ENCODE measurements at regions of chr6 and their contacts with region 1.

Region 1: DNA sequence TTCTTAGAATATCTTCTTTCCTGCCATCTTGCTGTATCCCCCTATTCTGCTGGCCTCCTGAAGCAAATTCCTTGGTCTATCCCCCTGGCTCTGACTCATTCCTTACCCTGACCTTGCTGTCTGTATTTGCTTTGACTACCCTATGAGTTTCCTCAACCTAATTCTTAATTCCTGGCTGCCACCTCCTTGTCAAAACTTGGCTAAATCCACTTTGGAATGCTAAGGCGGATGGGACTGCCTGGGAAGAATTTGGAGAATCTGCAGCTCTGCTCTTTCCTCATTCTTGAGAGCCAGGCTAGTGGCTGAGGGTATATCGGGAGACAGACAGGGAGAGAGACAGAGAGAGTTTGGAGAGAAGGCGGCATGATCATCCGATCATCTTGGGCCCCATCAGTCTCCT is 24.4 kb downstream of the CAP2 start:
- DNase-seq: no peak
- ATAC-seq: no peak
- H3K4me3 ChIP-seq: no peak overlapping the region
- H3K27ac ChIP-seq: no peak overlapping the region
- H3K4me1 ChIP-seq: no peaks in the 10 kb centered on the region
- H3K27me3 ChIP-seq: no peaks in the 10 kb centered on the region
- CTCF ChIP-seq: no peak
- EP300 ChIP-seq: no peak
- POLR2A ChIP-seq: no peak
- RAD21 ChIP-seq: no peak

Region 2: GRCh38 chr6:17167327-17167979 is 250.4 kb before region 1 on chr6:
- CTCF ChIA-PET with region 1: no interaction called
- POLR2A ChIA-PET with region 1: no interaction called
- RAD21 ChIA-PET with region 1: no interaction called
- SMC1A ChIA-PET with region 1: no interaction called
- in situ Hi-C with region 1: no loop called
- intact Hi-C with region 1: no loop called
- DNase-seq: no peak
- ATAC-seq: no peak
- H3K4me3 ChIP-seq: no peak overlapping the region
- H3K27ac ChIP-seq: no peak overlapping the region
- H3K4me1 ChIP-seq: no peaks in the 10 kb centered on the region
- H3K27me3 ChIP-seq: no peaks in the 10 kb centered on the region
- CTCF ChIP-seq: peak in 1 of 3 experiments; percentile 14; a peak in 2 of 6 replicates
- EP300 ChIP-seq: no peak
- POLR2A ChIP-seq: no peak
- RAD21 ChIP-seq: no peak

Region 3: DNA sequence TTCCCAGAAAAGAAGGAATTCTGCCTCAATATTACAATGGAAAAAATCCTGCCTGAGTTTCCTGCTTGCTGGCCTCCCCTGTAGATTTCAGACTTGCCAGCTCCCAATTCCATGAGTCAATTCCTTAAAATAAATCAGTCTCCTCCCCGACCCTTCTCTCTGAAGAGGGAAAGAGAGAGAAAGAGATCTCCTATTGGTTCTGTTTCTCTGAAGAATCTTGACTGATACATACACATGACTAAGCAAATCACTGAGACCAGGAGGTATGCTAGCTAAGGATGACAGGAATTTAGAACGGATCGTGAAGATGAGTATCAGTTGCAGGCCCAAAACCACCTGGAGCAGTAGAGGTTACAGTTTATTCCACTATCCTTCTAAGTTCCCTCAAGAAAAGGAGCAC is 148.0 kb before region 1 on chr6:
- CTCF ChIA-PET with region 1: no interaction called
- POLR2A ChIA-PET with region 1: no interaction called
- RAD21 ChIA-PET with region 1: no interaction called
- SMC1A ChIA-PET with region 1: no interaction called
- in situ Hi-C with region 1: no loop called
- intact Hi-C with region 1: no loop called
- DNase-seq: no peak
- ATAC-seq: no peak
- H3K4me3 ChIP-seq: no peak overlapping the region
- H3K27ac ChIP-seq: no peak overlapping the region
- H3K4me1 ChIP-seq: no peaks in the 10 kb centered on the region
- H3K27me3 ChIP-seq: no peaks in the 10 kb centered on the region
- CTCF ChIP-seq: no peak
- EP300 ChIP-seq: no peak
- POLR2A ChIP-seq: no peak
- RAD21 ChIP-seq: no peak

Region 4: DNA sequence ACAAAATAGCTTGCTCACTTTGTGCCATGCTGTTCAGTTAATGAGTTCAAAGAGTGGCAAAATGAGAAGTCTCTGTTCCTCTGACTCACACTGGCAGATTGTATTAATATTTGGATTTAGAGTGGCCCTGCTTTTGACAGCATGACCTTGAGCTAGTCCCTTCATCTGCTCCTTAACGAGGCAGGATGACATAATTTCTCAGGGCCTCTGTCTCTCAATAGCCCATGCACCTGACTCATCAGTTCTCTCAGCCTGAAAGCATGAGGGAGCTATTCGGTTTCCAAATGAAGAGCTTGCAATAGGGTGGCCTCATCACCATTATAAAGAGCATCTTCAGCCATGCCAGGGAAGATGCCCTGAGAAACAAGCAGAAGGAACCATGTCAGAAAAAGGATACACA is 13.8 kb after region 1 on chr6:
- CTCF ChIA-PET with region 1: interaction called, 8 read pairs
- POLR2A ChIA-PET with region 1: interaction called, 3 read pairs
- RAD21 ChIA-PET with region 1: interaction called, 4 read pairs
- SMC1A ChIA-PET with region 1: interaction called, 14 read pairs
- in situ Hi-C with region 1: no loop called
- intact Hi-C with region 1: no loop called
- DNase-seq: no peak
- ATAC-seq: peak; percentile 68
- H3K4me3 ChIP-seq: no peak overlapping the region
- H3K27ac ChIP-seq: no peak overlapping the region
- H3K4me1 ChIP-seq: no peaks in the 10 kb centered on the region
- H3K27me3 ChIP-seq: no peaks in the 10 kb centered on the region
- CTCF ChIP-seq: no peak
- EP300 ChIP-seq: no peak
- POLR2A ChIP-seq: no peak
- RAD21 ChIP-seq: no peak

Region 5: GRCh38 chr6:17621003-17621402 is 203.2 kb after region 1 on chr6:
- CTCF ChIA-PET with region 1: no interaction called
- POLR2A ChIA-PET with region 1: no interaction called
- RAD21 ChIA-PET with region 1: no interaction called
- SMC1A ChIA-PET with region 1: no interaction called
- in situ Hi-C with region 1: no loop called
- intact Hi-C with region 1: no loop called
- DNase-seq: peak; percentile 31
- ATAC-seq: peak; percentile 81
- H3K4me3 ChIP-seq: no peak overlapping the region
- H3K27ac ChIP-seq: peak overlapping the region; percentile 61
- H3K4me1 ChIP-seq: peaks cover 21% of the 10 kb centered on the region
- H3K27me3 ChIP-seq: no peaks in the 10 kb centered on the region
- CTCF ChIP-seq: no peak
- EP300 ChIP-seq: no peak
- POLR2A ChIP-seq: no peak
- RAD21 ChIP-seq: peak; percentile 12; the same call in 1 of the 2 replicates